ENCODE measurements at regions of chr11 and their contacts with region 1.

Region 1: GRCh38 chr11:27158722-27159679 is 118.4 kb downstream of the BBOX1 start:
- DNase-seq: peak; percentile 64
- H3K4me3 ChIP-seq: no peak overlapping the region
- H3K27ac ChIP-seq: peak overlapping the region; percentile 22
- H3K4me1 ChIP-seq: peaks cover 6% of the 10 kb centered on the region
- H3K27me3 ChIP-seq: no peaks in the 10 kb centered on the region
- CTCF ChIP-seq: peak; percentile 78 to 86

Region 2: DNA sequence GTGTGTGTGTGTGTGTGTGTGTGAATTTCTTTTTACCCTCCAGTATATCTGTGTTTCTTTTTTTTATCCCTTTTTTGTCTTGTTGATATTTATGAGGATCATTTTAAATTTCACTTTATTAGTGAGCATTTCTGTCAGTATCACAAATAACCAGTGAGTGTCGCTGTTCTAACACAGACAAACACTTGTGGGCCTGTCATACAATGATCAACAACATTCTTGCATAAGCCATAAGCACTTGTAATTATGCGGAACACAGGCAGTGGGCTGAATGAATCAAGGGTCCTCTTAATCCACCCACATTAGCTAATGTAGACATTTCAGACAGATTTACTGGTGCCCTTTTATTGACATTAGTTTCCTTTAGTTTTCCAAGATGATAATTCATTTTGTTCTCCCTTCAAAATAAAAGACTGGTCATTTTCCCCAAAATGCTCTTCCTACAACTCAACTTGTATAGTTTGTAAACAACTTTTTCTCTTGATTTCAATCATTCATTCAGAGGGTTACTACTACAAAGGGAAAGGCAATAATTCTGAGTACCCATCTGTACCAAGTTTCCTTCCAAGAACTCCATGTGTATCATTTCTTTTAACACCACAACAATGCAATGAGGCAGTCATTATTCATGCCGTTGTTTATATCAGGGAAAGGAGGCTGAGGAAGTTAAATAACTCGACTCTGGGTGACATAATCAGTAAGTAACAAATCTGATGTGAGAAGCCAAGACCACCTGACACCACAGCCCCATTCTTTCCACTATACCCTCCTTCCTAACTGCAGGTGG is 861.6 kb before region 1 on chr11:
- CTCF ChIA-PET with region 1: no interaction called
- dilution Hi-C with region 1: no loop called
- in situ Hi-C with region 1: loop called (anchors 10 kb)
- intact Hi-C with region 1: loop called (anchors 2 kb)
- DNase-seq: peak; percentile 42
- H3K4me3 ChIP-seq: no peak overlapping the region
- H3K27ac ChIP-seq: no peak overlapping the region
- H3K4me1 ChIP-seq: no peaks in the 10 kb centered on the region
- H3K27me3 ChIP-seq: no peaks in the 10 kb centered on the region
- CTCF ChIP-seq: peak; percentile 72 to 78

Region 3: DNA sequence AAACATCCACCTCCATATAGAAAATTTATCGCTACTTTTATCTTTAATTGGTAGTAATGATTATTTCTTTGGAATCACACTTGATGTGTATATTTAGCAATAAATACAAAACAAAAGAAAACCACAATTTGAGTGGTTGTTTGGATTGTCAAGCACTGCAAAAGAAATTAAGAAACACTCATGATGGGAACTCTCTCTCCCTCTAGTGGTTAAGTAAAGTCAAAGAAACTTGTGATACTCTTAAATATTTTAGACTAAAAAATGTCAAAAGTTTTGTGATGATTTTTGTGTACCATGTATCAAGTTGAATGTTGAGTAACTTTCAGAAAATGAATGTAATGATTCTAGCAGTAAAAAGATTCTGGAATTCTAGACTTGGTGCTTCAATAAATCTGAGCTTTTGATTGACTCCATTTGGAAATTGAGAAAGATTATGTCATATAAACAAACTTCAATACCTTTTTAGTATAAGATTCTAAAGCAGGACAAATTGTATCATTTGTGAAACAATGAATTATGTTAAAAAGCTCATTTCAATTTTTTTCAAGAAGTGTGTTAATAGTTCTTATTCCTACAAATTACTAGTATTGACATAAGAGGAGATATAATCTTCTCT is 607.7 kb before region 1 on chr11:
- CTCF ChIA-PET with region 1: no interaction called
- dilution Hi-C with region 1: no loop called
- in situ Hi-C with region 1: loop called in 1 of 2 experiments (anchors 25 kb)
- intact Hi-C with region 1: no loop called
- DNase-seq: peak; percentile 6
- H3K4me3 ChIP-seq: no peak overlapping the region
- H3K27ac ChIP-seq: no peak overlapping the region
- H3K4me1 ChIP-seq: no peaks in the 10 kb centered on the region
- H3K27me3 ChIP-seq: no peaks in the 10 kb centered on the region
- CTCF ChIP-seq: peak; percentile 33 to 55

Region 4: GRCh38 chr11:26753723-26754504 is 405.1 kb before region 1 on chr11:
- CTCF ChIA-PET with region 1: interaction called, 3 read pairs
- dilution Hi-C with region 1: no loop called
- in situ Hi-C with region 1: loop called in 1 of 2 experiments (anchors 10 kb)
- intact Hi-C with region 1: loop called (anchors 1 kb)
- DNase-seq: peak; percentile 40
- H3K4me3 ChIP-seq: no peak overlapping the region
- H3K27ac ChIP-seq: no peak overlapping the region
- H3K4me1 ChIP-seq: no peaks in the 10 kb centered on the region
- H3K27me3 ChIP-seq: no peaks in the 10 kb centered on the region
- CTCF ChIP-seq: peak; percentile 72 to 81

Region 5: GRCh38 chr11:27281740-27282590 is 123.0 kb after region 1 on chr11:
- CTCF ChIA-PET with region 1: no interaction called
- dilution Hi-C with region 1: no loop called
- in situ Hi-C with region 1: no loop called
- intact Hi-C with region 1: no loop called
- DNase-seq: no peak
- H3K4me3 ChIP-seq: no peak overlapping the region
- H3K27ac ChIP-seq: no peak overlapping the region
- H3K4me1 ChIP-seq: no peaks in the 10 kb centered on the region
- H3K27me3 ChIP-seq: no peaks in the 10 kb centered on the region
- CTCF ChIP-seq: no peak

Region 6: DNA sequence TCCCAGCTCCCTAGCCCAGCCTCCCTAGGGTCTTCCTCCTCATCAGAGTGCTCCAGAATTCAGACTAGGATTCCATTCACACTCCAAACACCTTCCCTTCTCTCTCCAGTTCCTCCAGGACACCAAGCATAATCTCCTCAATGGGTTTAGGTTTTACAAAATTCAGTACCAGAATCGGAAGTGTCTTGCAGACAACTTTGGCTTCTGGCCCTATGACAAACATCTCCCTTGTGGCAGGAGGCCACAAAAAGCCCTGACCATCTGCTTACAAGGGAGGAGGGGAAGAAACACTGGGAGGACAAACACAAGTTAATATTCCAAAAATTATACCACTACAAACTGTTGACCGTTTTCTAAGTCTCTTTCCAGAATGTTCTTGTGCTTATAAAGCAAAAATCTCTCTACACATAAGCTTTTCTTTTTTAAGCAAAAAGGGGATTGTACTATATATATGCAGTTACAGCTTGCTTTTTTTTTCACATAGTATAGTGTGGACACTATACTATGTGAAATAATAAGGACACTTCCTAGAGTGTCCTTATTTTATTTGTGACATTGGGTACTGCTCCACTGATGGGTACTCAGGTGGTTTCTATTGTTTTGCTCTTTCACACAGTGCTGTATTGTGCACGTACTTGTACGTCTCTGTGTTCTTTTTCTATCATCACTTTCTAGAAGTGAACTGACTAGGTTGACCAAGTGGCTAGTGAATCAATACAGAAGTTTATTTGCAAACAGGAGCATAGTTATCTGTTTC is 462.6 kb after region 1 on chr11:
- CTCF ChIA-PET with region 1: interaction called, 15 read pairs
- dilution Hi-C with region 1: no loop called
- in situ Hi-C with region 1: no loop called
- intact Hi-C with region 1: no loop called
- DNase-seq: no peak
- H3K4me3 ChIP-seq: no peak overlapping the region
- H3K27ac ChIP-seq: no peak overlapping the region
- H3K4me1 ChIP-seq: no peaks in the 10 kb centered on the region
- H3K27me3 ChIP-seq: no peaks in the 10 kb centered on the region
- CTCF ChIP-seq: no peak